ENCODE measurements at regions of chr11 and their contacts with region 1.

Region 1: GRCh38 chr11:111926505-111927391 is 8.0 kb downstream of the C11orf52 start:
- DNase-seq: peak; percentile 99 to 100
- H3K4me3 ChIP-seq: peak overlapping the region; percentile 30
- H3K4me3 Mint-ChIP-seq: peak overlapping the region; percentile 78
- H3K27ac Mint-ChIP-seq: peak overlapping the region; percentile 96
- H3K4me1 ChIP-seq: peaks cover 21% of the 10 kb centered on the region
- H3K4me1 Mint-ChIP-seq: peaks cover 39% of the 10 kb centered on the region
- H3K27me3 ChIP-seq: no peaks in the 10 kb centered on the region
- H3K27me3 Mint-ChIP-seq: no peaks in the 10 kb centered on the region
- CTCF ChIP-seq: no peak

Region 2: DNA sequence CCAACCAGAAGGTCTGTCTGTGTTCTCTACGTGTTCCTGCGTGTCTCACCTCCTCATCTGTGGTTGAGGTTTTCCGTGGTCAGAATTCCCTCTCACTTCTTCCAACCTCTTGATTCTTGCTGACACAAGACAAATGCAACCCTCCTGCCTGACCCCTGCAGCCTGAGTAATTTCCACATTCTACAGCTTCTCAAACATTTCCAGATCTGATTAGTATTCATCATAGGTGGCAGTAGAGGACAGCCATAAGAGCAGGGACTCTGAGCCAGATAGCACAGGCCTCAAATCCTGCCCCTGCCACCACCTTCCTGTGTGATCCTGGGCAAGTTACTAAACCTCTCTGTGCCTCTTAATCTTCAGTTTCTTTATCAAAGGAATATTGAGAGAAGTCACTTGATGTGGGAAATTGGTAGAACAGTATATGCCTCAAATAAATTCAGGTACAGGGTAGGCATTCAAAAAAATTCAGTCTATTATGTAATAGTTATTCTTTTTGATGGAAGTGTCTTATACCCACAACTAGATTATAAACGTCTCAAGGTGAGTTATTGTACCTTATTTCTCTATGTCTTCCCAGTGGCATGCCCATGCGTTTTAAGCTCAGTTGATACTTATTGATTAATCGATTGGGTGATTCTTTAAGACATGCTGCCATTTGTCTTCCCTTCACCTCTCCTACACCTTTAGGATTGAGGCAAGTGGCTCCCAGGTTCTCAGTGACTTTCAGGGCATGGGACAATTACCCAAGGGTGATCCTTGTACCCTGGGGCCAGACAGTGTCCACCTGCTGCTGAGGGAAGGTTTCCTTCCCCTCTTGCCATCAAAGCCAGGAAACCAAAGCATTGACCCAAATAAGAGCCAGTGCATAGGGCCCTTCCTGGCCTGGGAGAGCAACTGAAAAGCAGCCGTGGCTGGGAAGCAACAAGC is 567.3 kb before region 1 on chr11:
- CTCF ChIA-PET with region 1: no interaction called
- POLR2A ChIA-PET with region 1: no interaction called
- intact Hi-C with region 1: no loop called
- DNase-seq: no peak
- H3K4me3 ChIP-seq: no peak overlapping the region
- H3K4me3 Mint-ChIP-seq: peak overlapping the region; percentile 13
- H3K27ac Mint-ChIP-seq: no peak overlapping the region
- H3K4me1 ChIP-seq: peaks cover 73% of the 10 kb centered on the region
- H3K4me1 Mint-ChIP-seq: peaks cover 41% of the 10 kb centered on the region
- H3K27me3 ChIP-seq: no peaks in the 10 kb centered on the region
- H3K27me3 Mint-ChIP-seq: no peaks in the 10 kb centered on the region
- CTCF ChIP-seq: peak in 1 of 2 experiments; percentile 11

Region 3: DNA sequence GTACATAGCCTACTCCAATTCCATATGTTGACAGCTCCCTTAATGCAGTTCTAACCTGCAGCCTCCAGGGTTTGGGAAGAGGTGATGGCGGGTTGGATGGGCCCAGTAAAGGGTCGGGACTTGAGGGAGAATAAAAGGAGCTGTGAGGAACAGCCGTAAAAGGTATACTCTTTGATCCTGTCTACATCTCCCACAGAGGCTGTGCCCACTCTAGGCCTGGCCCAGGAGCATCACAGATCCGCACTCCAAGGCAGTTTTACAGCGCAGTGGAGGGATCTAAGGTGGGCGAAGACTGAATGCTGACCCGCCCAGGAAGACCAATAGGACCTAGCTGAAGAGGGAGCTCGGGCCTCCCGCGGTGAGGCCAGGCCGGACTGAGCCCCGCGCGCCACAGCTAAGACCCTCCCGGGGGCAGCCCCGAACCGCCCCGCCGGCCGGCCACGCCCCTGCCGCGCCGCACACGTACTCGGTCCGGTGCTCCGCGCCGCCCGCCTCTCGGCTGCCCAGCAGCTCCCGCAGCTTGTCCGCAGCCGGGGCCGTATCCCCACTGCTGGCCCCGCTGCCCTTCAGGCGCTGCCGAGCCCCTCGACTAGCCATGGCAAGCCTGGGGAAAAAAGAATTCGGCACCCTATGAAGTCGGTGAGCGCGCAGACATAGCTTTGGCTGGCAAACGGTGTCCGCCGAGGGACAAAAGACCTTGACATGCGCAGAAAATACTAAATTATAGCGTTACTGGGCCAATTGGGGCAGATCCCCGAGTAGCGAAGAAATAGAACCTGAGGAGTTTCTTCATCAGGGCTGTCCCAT is 55.7 kb before region 1 on chr11 and contains the start of gene ALG9:
- CTCF ChIA-PET with region 1: interaction called, 31 read pairs
- POLR2A ChIA-PET with region 1: interaction called, 13 read pairs
- intact Hi-C with region 1: loop called (anchors 2 kb)
- DNase-seq: peak; percentile 89 to 94
- H3K4me3 ChIP-seq: peak within 1 kb of the TSS; percentile 94
- H3K4me3 Mint-ChIP-seq: peak within 1 kb of the TSS; percentile 91
- H3K27ac Mint-ChIP-seq: peak within 1 kb of the TSS; percentile 53
- H3K4me1 ChIP-seq: 0 out of 2 replicates have a peak, but pooled peaks cover 3% of the 10 kb centered on the region
- H3K4me1 Mint-ChIP-seq: peaks cover 16% of the 10 kb centered on the region
- H3K27me3 ChIP-seq: no peaks in the 10 kb centered on the region
- H3K27me3 Mint-ChIP-seq: no peaks in the 10 kb centered on the region
- CTCF ChIP-seq: peak; percentile 55 to 63
- total RNA-seq, gene ALG9: 55.3 and 57.4 TPM in 2 replicates

Region 4: GRCh38 chr11:111938687-111939160 is 12.0 kb after region 1 on chr11:
- CTCF ChIA-PET with region 1: interaction called, 17 read pairs
- POLR2A ChIA-PET with region 1: interaction called, 8 read pairs
- intact Hi-C with region 1: no loop called
- DNase-seq: no peak
- H3K4me3 ChIP-seq: no peak overlapping the region
- H3K4me3 Mint-ChIP-seq: peak overlapping the region; percentile 77
- H3K27ac Mint-ChIP-seq: no peak overlapping the region
- H3K4me1 ChIP-seq: peaks cover 18% of the 10 kb centered on the region
- H3K4me1 Mint-ChIP-seq: peaks cover 15% of the 10 kb centered on the region
- H3K27me3 ChIP-seq: no peaks in the 10 kb centered on the region
- H3K27me3 Mint-ChIP-seq: no peaks in the 10 kb centered on the region
- CTCF ChIP-seq: no peak

Region 5: DNA sequence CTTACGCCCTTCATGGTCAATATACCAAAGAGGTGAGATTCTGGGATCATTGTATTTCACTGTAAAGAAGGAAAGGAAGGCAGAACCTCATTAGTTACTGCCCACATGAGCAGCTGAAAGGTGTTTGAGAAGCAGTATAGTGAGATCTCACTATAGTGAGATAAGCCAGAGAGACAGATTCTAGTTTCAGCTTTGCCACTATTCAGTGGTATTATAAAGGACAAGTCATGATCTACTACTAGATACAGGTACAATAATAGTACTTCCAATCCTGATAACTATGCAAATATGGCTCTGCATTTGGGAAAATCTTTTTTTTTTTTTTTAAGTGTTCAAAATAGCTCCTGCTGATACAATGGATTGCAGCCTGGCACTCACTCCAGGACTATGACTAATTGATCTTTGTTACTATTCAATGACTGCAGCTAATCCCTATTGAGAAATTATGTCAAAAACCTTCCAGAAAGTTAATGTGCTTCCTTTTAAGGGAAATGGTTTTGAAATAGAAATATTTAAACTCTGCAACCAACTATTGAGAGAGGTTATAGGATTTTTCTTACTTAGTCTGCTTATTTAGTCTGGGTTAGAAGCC is 90.1 kb after region 1 on chr11:
- CTCF ChIA-PET with region 1: interaction called, 10 read pairs
- POLR2A ChIA-PET with region 1: no interaction called
- intact Hi-C with region 1: no loop called
- DNase-seq: no peak
- H3K4me3 ChIP-seq: no peak overlapping the region
- H3K4me3 Mint-ChIP-seq: no peak overlapping the region
- H3K27ac Mint-ChIP-seq: no peak overlapping the region
- H3K4me1 ChIP-seq: peaks cover 15% of the 10 kb centered on the region
- H3K4me1 Mint-ChIP-seq: peaks cover 32% of the 10 kb centered on the region
- H3K27me3 ChIP-seq: no peaks in the 10 kb centered on the region
- H3K27me3 Mint-ChIP-seq: no peaks in the 10 kb centered on the region
- CTCF ChIP-seq: no peak

Region 6: DNA sequence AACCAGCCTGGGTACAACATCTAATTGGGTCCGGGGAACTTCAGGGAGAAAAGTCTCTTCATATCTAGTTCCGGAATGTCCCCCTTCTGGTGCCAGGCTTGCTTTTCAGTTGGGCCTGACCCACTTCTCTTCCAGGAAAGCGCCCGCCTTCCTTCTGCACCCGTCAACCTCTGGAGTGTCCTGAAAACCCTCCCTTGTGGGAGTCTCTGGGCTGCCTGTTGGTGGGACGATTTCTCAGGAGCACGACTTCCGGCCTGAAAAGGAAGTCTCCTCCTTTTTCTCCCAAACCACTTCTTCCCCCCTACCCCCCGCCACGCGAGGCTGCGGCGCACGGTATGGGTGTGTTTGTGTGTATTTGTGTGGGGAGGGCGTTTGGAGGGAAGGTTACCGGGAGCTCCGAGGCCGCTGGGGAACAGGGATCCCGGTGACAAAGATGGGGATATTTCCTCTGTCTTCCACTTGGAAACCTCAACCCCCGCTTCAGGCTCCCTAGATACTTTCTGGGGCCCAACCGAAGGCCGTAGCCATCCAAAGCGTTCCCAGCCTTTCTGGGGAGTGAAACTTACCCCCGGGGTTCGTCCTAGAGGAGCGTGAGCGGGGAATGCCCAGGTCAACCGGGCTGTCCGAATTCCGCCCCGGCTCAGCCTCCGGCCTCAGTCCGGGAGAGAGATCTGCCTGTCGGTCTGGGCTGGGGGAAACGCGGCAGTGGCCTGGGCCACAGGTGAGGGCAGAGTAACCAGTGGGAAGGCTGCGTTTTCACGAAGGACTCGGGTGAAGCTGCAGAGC is 147.5 kb after region 1 on chr11 and contains the start of gene NKAPD1:
- CTCF ChIA-PET with region 1: no interaction called
- POLR2A ChIA-PET with region 1: no interaction called
- intact Hi-C with region 1: loop called (anchors 2 kb)
- DNase-seq: peak; percentile 89 to 90
- H3K4me3 ChIP-seq: peak within 1 kb of the TSS; percentile 63
- H3K4me3 Mint-ChIP-seq: peak within 1 kb of the TSS; percentile 86
- H3K27ac Mint-ChIP-seq: peak within 1 kb of the TSS; percentile 98
- H3K4me1 ChIP-seq: no peaks in the 10 kb centered on the region
- H3K4me1 Mint-ChIP-seq: peaks cover 12% of the 10 kb centered on the region
- H3K27me3 ChIP-seq: no peaks in the 10 kb centered on the region
- H3K27me3 Mint-ChIP-seq: no peaks in the 10 kb centered on the region
- CTCF ChIP-seq: peak in 1 of 2 experiments; percentile 13
- total RNA-seq, gene NKAPD1: 36.9 and 37.4 TPM in 2 replicates

Measured in Caco-2 (cell line).